ENCODE measurements at regions of chr1 and their contacts with region 1.

Region 1: GRCh38 chr1:231211005-231211857 is 29.8 kb upstream of the GNPAT start:
- DNase-seq: peak; percentile 53
- ATAC-seq: peak; percentile 97
- H3K4me3 ChIP-seq: peak overlapping the region; percentile 55
- H3K27ac ChIP-seq: no peak overlapping the region
- H3K4me1 ChIP-seq: no peaks in the 10 kb centered on the region
- H3K27me3 ChIP-seq: peaks cover 20% of the 10 kb centered on the region
- CTCF ChIP-seq: peak; percentile 90
- POLR2A ChIP-seq: no peak
- RAD21 ChIP-seq: peak; percentile 93

Region 2: GRCh38 chr1:230642263-230642959 is 568.8 kb before region 1 on chr1 and contains the start of gene COG2:
- CTCF ChIA-PET with region 1: no interaction called
- POLR2A ChIA-PET with region 1: no interaction called
- dilution Hi-C with region 1: no loop called
- in situ Hi-C with region 1: no loop called
- intact Hi-C with region 1: loop called (anchors 5 kb)
- DNase-seq: peak; percentile 90
- ATAC-seq: peak; percentile 99
- H3K4me3 ChIP-seq: peak within 1 kb of the TSS; percentile 99
- H3K27ac ChIP-seq: peak within 1 kb of the TSS; percentile 77
- H3K4me1 ChIP-seq: peaks cover 4% of the 10 kb centered on the region
- H3K27me3 ChIP-seq: peaks cover 10% of the 10 kb centered on the region; the same call in 1 of the 2 replicates
- CTCF ChIP-seq: peak; percentile 99
- POLR2A ChIP-seq: peak; percentile 76
- RAD21 ChIP-seq: peak; percentile 64
- total RNA-seq, gene COG2: 16.7 and 17.8 TPM in 2 replicates

Region 3: DNA sequence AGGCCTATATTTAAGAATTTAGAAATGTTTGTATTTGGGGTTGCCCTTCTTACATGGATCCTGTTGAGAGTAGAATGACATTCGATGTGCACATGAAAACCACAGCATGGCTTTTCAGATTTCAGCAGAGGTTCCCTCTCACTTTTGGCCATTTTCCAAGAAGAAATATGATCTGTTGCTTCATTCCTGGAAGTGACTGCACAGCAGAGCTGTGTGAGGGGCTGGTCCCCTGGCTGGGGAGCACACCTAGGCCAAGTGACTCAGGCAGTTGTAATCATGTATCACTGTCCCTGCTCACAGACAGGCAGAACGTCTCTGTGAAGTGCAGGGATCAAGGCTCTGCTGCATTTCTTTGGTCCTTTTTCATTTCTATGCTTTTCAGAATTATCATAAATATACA is 529.6 kb before region 1 on chr1:
- CTCF ChIA-PET with region 1: no interaction called
- POLR2A ChIA-PET with region 1: no interaction called
- dilution Hi-C with region 1: no loop called
- in situ Hi-C with region 1: no loop called
- intact Hi-C with region 1: loop called (anchors 1 kb)
- DNase-seq: peak; percentile 85
- ATAC-seq: peak; percentile 71
- H3K4me3 ChIP-seq: no peak overlapping the region
- H3K27ac ChIP-seq: no peak overlapping the region
- H3K4me1 ChIP-seq: peaks cover 10% of the 10 kb centered on the region
- H3K27me3 ChIP-seq: no peaks in the 10 kb centered on the region
- CTCF ChIP-seq: no peak
- POLR2A ChIP-seq: no peak
- RAD21 ChIP-seq: no peak

Region 4: DNA sequence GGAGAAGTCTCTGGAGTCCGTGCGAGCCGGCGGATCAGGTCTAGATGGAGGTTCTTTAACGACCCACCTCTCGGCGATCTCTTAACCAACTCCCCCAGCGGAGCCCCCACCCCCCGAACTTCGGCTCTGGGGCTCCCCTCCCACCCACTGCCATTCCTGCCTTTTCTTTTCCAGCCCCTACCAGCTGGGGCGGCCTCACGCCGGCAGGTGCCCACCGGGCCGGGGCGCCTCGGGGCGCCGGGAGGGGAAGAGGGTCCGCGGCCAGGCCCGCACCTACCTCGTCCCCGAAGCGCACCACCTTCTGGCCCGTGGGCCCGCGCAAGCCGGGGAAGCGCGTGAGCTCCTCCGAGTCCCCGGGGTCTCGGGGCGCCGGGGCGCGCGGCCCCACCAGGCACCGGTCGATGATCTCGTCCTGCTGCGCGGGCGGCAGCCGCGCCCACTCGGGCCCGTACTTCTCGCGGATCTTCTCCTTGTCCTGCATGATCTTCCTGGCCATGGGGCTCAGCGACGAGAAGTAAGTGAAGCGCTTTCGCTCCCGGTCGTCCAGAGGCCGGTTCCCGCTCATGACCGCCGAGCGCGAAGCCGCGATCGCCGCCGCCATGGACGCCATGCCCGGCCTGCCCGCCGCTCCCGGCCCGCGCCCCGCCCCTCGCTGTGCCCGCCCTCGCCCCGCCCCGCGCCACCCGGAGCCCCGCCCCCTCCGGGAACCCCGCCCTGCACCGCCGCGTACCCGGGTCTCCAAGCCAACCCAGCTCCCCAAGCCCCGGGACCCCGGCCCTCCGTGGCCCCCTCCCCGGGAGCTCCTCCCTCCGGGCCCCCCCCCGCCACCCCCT is 343.1 kb before region 1 on chr1 and contains the start of gene C1orf198:
- CTCF ChIA-PET with region 1: no interaction called
- POLR2A ChIA-PET with region 1: no interaction called
- dilution Hi-C with region 1: no loop called
- in situ Hi-C with region 1: no loop called
- intact Hi-C with region 1: loop called (anchors 2 kb)
- DNase-seq: no peak
- ATAC-seq: peak; percentile 84
- H3K4me3 ChIP-seq: peak within 1 kb of the TSS; percentile 100
- H3K27ac ChIP-seq: peak within 1 kb of the TSS; percentile 100
- H3K4me1 ChIP-seq: peaks cover 28% of the 10 kb centered on the region
- H3K27me3 ChIP-seq: no peaks in the 10 kb centered on the region
- CTCF ChIP-seq: no peak
- POLR2A ChIP-seq: 0 out of 2 replicates have a peak, but pooled peaks have one; percentile 48
- RAD21 ChIP-seq: no peak
- total RNA-seq, gene C1orf198: 74.4 and 76.2 TPM in 2 replicates

Region 5: GRCh38 chr1:230922620-230923019 is 288.6 kb before region 1 on chr1:
- CTCF ChIA-PET with region 1: interaction called, 4 read pairs
- POLR2A ChIA-PET with region 1: no interaction called
- dilution Hi-C with region 1: no loop called
- in situ Hi-C with region 1: loop called (anchors 5 kb)
- intact Hi-C with region 1: loop called (anchors 1 kb)
- DNase-seq: no peak
- ATAC-seq: no peak
- H3K4me3 ChIP-seq: no peak overlapping the region
- H3K27ac ChIP-seq: no peak overlapping the region
- H3K4me1 ChIP-seq: 0 out of 2 replicates have a peak, but pooled peaks cover 2% of the 10 kb centered on the region
- H3K27me3 ChIP-seq: no peaks in the 10 kb centered on the region
- CTCF ChIP-seq: no peak
- POLR2A ChIP-seq: no peak
- RAD21 ChIP-seq: no peak

Region 6: GRCh38 chr1:230992100-230992774 is 219.0 kb before region 1 on chr1:
- CTCF ChIA-PET with region 1: no interaction called
- POLR2A ChIA-PET with region 1: no interaction called
- dilution Hi-C with region 1: no loop called
- in situ Hi-C with region 1: no loop called
- intact Hi-C with region 1: loop called (anchors 5 kb)
- DNase-seq: no peak
- ATAC-seq: no peak
- H3K4me3 ChIP-seq: no peak overlapping the region
- H3K27ac ChIP-seq: no peak overlapping the region
- H3K4me1 ChIP-seq: no peaks in the 10 kb centered on the region
- H3K27me3 ChIP-seq: no peaks in the 10 kb centered on the region
- CTCF ChIP-seq: no peak
- POLR2A ChIP-seq: no peak
- RAD21 ChIP-seq: no peak

Measured in IMR-90 (cell line).